Activated CD4-positive, alpha-beta memory T cell treated with anti-CD3 and anti-CD28 coated beads for 36 hours (primary cell): ENCODE measurements at regions of chr4 and their contacts with region 1.

Region 1: GRCh38 chr4:40199999-40200874 is 3.4 kb downstream of the RHOH start:
- DNase-seq: peak; percentile 91
- H3K4me3 Mint-ChIP-seq: peak overlapping the region; percentile 93
- H3K27ac Mint-ChIP-seq: peak overlapping the region; percentile 98
- H3K4me1 Mint-ChIP-seq: peaks cover 39% of the 10 kb centered on the region
- H3K27me3 Mint-ChIP-seq: no peaks in the 10 kb centered on the region

Region 2: GRCh38 chr4:39697740-39698423 is 502.4 kb before region 1 on chr4 and contains the start of gene UBE2K:
- CTCF ChIA-PET with region 1: no interaction called
- POLR2A ChIA-PET with region 1: no interaction called
- intact Hi-C with region 1: loop called (anchors 5 kb)
- DNase-seq: peak; percentile 92
- H3K4me3 Mint-ChIP-seq: peak within 1 kb of the TSS; percentile 96
- H3K27ac Mint-ChIP-seq: peak within 1 kb of the TSS; percentile 96
- H3K4me1 Mint-ChIP-seq: peaks cover 36% of the 10 kb centered on the region
- H3K27me3 Mint-ChIP-seq: no peaks in the 10 kb centered on the region
- total RNA-seq, gene UBE2K: 81.4 to 83.5 TPM

Region 3: GRCh38 chr4:40149960-40150385 is 50.3 kb before region 1 on chr4:
- CTCF ChIA-PET with region 1: interaction called, 4 read pairs
- POLR2A ChIA-PET with region 1: interaction called, 4 read pairs
- intact Hi-C with region 1: loop called (anchors 1 kb)
- DNase-seq: peak; percentile 74
- H3K4me3 Mint-ChIP-seq: no peak overlapping the region
- H3K27ac Mint-ChIP-seq: no peak overlapping the region
- H3K4me1 Mint-ChIP-seq: peaks cover 27% of the 10 kb centered on the region
- H3K27me3 Mint-ChIP-seq: no peaks in the 10 kb centered on the region

Region 4: GRCh38 chr4:40228497-40229365 is 28.5 kb after region 1 on chr4:
- CTCF ChIA-PET with region 1: interaction called, 16 read pairs
- POLR2A ChIA-PET with region 1: interaction called, 97 read pairs
- intact Hi-C with region 1: loop called (anchors 1 kb)
- DNase-seq: peak; percentile 56
- H3K4me3 Mint-ChIP-seq: peak overlapping the region; percentile 58
- H3K27ac Mint-ChIP-seq: peak overlapping the region; percentile 92
- H3K4me1 Mint-ChIP-seq: peaks cover 93% of the 10 kb centered on the region
- H3K27me3 Mint-ChIP-seq: no peaks in the 10 kb centered on the region

Region 5: GRCh38 chr4:40283968-40284367 is 83.7 kb after region 1 on chr4:
- CTCF ChIA-PET with region 1: interaction called, 4 read pairs
- POLR2A ChIA-PET with region 1: interaction called, 12 read pairs
- intact Hi-C with region 1: loop called (anchors 1 kb)
- DNase-seq: peak; percentile 92
- H3K4me3 Mint-ChIP-seq: peak overlapping the region; percentile 55
- H3K27ac Mint-ChIP-seq: peak overlapping the region; percentile 82
- H3K4me1 Mint-ChIP-seq: peaks cover 60% of the 10 kb centered on the region
- H3K27me3 Mint-ChIP-seq: no peaks in the 10 kb centered on the region